ENCODE measurements at regions of chr11 and their contacts with region 1.

Region 1: DNA sequence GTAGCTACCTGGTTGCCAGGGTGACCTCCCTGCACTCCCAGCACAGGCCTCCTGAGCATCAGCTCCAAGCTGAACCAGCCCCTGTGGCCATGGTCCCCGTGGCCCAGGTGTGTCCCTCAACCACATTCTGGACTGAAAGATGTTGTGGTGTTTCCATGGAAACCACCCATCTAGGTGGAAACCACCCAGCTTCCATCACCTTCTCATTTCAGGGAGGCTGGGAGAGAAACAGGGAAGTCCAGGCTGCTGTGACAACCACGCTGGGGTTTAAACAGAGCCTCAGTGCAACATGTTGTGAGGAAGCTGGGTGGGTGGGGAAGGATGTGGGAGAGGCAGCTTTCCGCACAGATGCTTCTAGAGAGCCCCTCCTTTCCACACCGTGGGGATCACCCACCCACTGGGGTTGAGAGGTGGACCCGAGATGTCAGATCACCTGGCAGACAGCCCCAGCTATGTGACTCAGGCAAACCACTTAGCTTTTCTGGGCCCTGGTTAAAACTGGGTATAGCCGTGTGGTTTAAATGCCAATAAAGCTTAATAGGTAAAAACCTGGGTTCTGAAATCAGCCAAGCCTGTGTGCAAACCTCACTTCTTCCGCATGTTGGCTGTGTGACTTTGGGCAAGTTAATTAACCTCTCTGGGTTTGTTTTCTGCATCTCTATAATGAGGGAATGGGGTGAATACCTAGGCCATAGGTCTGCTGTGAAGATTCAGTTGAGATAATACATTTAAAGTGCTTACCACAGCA is 46.4 kb downstream of the CD82 start:
- DNase-seq: peak; percentile 62
- ATAC-seq: peak; percentile 77
- H3K4me3 Mint-ChIP-seq: peak overlapping the region; percentile 45
- H3K27ac Mint-ChIP-seq: peak overlapping the region; percentile 74
- H3K4me1 Mint-ChIP-seq: peaks cover 61% of the 10 kb centered on the region
- H3K27me3 Mint-ChIP-seq: no peaks in the 10 kb centered on the region

Region 2: DNA sequence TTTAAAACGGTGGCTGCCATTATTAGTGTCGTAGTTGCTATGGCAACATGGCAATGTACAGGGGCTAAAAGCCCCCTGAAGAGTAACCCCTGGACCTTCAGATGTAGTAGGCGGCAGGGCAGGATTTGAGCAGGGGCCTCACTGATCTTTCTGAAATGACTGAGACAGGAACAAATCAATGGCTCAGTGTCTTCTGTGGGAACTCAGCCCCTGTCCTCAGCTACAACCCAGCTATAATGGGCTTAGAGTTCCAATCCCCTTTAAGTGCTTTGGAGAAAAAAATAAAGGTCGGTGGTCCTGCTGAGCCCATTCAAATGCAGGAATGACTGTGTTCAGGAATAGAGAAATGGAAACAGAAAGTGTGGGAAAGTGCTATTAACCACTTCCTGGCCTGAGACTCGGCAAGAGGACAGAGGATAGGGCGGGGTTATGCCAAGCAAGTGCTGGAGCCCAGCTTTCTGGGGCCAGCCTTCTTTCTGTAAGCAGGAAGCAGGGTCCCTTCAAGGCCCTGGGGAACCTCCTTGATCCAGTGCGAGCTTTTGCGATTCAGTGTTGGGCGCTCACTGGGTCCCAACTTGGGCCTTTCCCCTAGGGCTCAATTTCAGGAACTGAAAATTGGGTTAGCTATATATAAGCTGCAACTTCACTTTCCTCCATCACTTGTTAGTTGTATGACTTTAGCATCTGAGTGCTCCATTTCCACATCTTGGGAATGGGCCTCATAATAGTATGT is 52.5 kb before region 1 on chr11:
- POLR2A ChIA-PET with region 1: interaction called, 30 read pairs
- DNase-seq: no peak
- ATAC-seq: peak; percentile 92
- H3K4me3 Mint-ChIP-seq: peak overlapping the region; percentile 70
- H3K27ac Mint-ChIP-seq: peak overlapping the region; percentile 87
- H3K4me1 Mint-ChIP-seq: peaks cover 36% of the 10 kb centered on the region
- H3K27me3 Mint-ChIP-seq: no peaks in the 10 kb centered on the region

Region 3: GRCh38 chr11:44565211-44565952 is 46.5 kb before region 1 on chr11 and contains the start of gene CD82:
- POLR2A ChIA-PET with region 1: interaction called, 30 read pairs
- DNase-seq: peak; percentile 100
- ATAC-seq: peak; percentile 89
- H3K4me3 Mint-ChIP-seq: peak within 1 kb of the TSS; percentile 88
- H3K27ac Mint-ChIP-seq: peak within 1 kb of the TSS; percentile 84
- H3K4me1 Mint-ChIP-seq: peaks cover 55% of the 10 kb centered on the region
- H3K27me3 Mint-ChIP-seq: no peaks in the 10 kb centered on the region
- total RNA-seq, gene CD82: 71.9 to 80.2 TPM

Region 4: GRCh38 chr11:44596525-44597276 is 15.2 kb before region 1 on chr11:
- POLR2A ChIA-PET with region 1: interaction called, 15 read pairs
- DNase-seq: peak; percentile 67
- ATAC-seq: peak; percentile 81
- H3K4me3 Mint-ChIP-seq: peak overlapping the region; percentile 59
- H3K27ac Mint-ChIP-seq: peak overlapping the region; percentile 88
- H3K4me1 Mint-ChIP-seq: peaks cover 33% of the 10 kb centered on the region
- H3K27me3 Mint-ChIP-seq: no peaks in the 10 kb centered on the region

Measured in activated naive CD8-positive, alpha-beta T cell treated with anti-CD3 and anti-CD28 coated beads, Interleukin-2, amount 10 ng/mL, durations not matched to agents 7 days and 5 days (primary cell).